WTC11 (cell line): ENCODE measurements at regions of chr2 and their contacts with region 1.

Region 1: DNA sequence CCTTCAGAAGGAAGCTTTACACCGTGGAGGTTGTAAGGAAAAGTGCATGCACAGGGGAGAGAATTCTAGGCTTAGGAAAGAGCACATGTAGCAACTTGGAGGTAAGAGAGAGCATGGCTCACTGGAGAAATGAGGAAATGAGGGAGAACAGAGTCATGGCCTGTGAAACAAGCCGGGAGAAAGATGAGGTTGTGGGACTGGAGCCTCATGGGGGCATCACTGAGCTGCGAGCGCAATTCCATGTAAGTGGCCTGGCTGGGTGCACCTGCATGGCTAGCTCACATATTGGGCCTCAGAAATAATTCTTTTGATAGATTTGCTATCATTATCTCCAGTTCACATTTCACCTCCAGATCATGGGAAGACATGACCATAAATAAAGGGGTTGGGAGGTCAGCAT is 785.5 kb upstream of the RAB6C start:
- DNase-seq: peak; percentile 31
- ATAC-seq: peak; percentile 32; the same call in 1 of the 2 replicates
- H3K4me3 Mint-ChIP-seq: no peak overlapping the region
- H3K27ac Mint-ChIP-seq: no peak overlapping the region
- H3K4me1 Mint-ChIP-seq: peaks cover 50% of the 10 kb centered on the region
- H3K27me3 Mint-ChIP-seq: peaks cover 14% of the 10 kb centered on the region
- CTCF ChIP-seq: no peak

Region 2: DNA sequence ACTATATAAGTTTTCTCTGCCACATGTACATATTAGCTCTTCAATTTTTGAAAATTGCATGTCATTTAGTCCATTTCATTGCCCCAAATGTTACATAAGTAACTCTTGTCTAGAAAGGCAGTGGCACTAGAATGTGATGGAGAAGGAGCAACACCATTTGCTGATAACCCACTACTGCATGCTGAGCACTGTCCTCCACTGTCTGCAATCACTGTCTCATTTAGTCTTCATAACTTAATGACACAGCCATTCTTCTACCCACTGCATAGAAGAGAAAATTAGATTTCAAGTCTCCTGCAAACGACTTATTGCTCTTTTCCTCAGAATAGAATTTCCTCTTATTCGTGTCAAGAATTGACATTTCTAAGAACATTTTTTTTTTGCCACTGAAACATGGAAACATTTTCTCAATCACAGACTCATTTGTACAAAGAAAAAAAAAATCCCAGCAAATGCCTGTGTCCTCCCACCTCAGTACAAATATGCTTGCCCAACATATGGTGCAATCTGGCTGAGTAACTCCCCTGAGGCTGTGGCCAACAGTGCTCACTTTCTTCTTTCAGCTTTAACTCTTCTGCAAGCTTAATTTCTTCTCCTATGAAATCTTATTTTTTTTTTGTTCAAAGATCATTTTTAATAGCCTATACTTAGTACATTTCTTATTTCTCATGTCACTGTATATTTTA is 106.7 kb before region 1 on chr2:
- CTCF ChIA-PET with region 1: no interaction called
- POLR2A ChIA-PET with region 1: no interaction called
- DNase-seq: no peak
- ATAC-seq: no peak
- H3K4me3 Mint-ChIP-seq: no peak overlapping the region
- H3K27ac Mint-ChIP-seq: no peak overlapping the region
- H3K4me1 Mint-ChIP-seq: peaks cover 5% of the 10 kb centered on the region; the same call in 1 of the 2 replicates
- H3K27me3 Mint-ChIP-seq: no peaks in the 10 kb centered on the region
- CTCF ChIP-seq: no peak

Region 3: GRCh38 chr2:129253461-129253812 is 59.5 kb after region 1 on chr2:
- CTCF ChIA-PET with region 1: interaction called, 10 read pairs
- POLR2A ChIA-PET with region 1: no interaction called
- DNase-seq: peak; percentile 49
- ATAC-seq: peak; percentile 96
- H3K4me3 Mint-ChIP-seq: no peak overlapping the region
- H3K27ac Mint-ChIP-seq: no peak overlapping the region
- H3K4me1 Mint-ChIP-seq: peaks cover 4% of the 10 kb centered on the region
- H3K27me3 Mint-ChIP-seq: peaks cover 2% of the 10 kb centered on the region
- CTCF ChIP-seq: no peak